Dendritic cell treated with granulocyte-macrophage colony-stimulating factor and Interleukin-4, amounts not matched to agents 40 ng/mL and 50 ng/mL, for 4 days (primary cell): ENCODE measurements at regions of chrX and their contacts with region 1.

Region 1: DNA sequence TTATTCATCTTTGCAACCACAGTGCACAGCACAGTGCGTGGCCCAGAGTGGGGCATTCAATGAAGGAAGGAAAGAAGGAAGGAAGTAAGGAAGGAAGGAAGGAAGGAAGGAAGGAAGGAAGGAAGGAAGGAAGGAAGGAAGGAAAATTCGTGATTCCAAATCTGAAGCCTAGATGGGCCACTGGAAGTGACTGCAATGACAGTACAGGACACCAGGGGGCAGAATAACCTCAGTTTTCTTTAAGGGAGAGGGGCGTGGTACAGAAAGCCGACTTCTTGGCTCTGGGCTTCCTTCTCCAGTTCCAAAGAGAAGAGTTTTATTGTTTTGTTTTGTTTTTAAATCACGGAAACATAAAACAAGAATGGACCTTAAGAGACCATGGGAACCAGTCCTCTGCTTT is 47.8 kb downstream of the APLN start:
- H3K4me3 Mint-ChIP-seq: no peak overlapping the region
- H3K27ac Mint-ChIP-seq: no peak overlapping the region
- H3K4me1 Mint-ChIP-seq: peaks cover 31% of the 10 kb centered on the region
- H3K27me3 Mint-ChIP-seq: no peaks in the 10 kb centered on the region

Region 2: DNA sequence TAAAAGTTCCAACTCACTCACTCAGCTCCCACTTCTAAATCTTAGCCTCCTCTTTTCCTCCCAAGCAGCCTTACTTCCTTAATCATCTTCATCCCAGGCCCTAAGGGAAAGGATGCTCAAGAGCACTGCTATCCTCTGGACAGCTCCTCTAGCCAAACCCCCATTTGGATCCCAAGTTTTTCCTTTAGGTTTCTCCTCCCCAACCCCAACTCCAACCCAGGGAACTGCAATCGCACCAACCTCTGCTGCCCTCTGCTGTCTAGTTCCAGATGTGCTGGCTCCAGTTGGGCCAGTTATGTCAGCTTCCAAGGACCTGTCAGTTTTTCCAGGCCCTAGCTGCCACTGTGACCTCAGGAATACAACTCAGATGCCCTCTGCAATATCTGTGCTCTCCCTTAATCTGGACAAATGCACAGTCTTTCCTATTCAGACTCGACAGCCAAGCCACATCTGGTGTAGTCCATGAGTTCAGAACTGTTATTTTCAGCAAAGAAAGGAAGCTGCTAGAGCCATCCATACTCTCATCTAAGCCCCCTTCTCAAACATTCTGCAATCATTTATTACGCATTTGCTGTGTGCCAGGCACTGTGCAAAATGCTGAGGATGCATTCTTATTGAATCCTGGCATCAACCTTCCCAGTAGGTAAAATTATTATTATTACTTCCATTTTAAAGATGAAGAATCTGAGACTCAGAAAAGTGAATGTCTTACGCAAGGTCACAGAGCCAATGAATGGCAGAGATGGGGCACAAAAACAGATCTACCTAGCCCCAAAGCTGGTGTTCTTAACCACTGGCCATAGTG is 119.6 kb after region 1 on chrX:
- intact Hi-C with region 1: loop called (anchors 1 kb)
- H3K4me3 Mint-ChIP-seq: no peak overlapping the region
- H3K27ac Mint-ChIP-seq: no peak overlapping the region
- H3K4me1 Mint-ChIP-seq: peaks cover 33% of the 10 kb centered on the region
- H3K27me3 Mint-ChIP-seq: peaks cover 7% of the 10 kb centered on the region

Region 3: DNA sequence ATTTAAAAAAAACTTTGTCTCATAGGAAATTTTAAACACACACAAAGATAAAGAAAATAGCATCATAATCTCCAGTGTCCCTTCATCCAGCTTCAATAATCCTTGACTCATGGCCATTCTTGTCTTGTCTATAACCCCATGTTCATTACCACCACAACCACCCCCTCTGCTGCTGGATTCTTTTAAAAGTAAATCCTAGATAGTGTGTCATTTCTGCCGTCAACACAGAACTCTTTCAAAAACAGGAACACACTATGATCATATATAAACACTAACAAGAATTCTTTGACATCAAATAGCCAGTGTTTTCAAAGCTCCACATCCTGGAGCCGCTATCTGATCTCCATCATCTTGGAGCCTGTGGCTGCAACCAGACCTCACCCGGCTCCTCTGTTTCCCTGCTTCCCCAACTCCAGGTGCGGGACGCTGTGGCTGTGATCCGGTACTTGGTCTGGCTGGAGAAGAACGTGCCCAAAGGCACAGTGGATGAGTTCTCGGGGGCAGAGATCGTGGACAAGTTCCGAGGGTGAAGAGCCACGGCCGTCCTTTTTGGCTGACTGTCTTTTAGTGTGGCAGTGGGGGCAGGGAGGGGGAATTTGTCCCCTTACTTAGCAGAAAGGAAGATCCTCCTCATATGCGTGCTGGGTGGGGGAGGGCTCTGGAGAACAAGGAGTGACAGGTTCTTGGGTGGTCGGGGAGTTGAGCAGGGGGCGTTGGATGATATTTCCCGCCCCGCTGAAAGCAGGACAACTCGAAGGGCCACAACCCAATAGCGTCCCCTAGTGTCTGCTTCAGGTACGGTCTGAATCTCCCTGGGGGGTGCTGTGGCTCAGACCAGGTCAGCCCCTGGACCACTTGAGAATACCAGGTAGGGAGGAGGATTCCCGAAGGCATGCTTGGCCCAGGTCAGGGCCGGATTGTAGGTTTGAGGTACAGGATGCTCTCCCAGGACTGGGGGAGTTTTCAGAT is 147.4 kb after region 1 on chrX:
- intact Hi-C with region 1: loop called (anchors 5 kb)
- H3K4me3 Mint-ChIP-seq: peak overlapping the region; percentile 67
- H3K27ac Mint-ChIP-seq: peak overlapping the region; percentile 88
- H3K4me1 Mint-ChIP-seq: peaks cover 82% of the 10 kb centered on the region
- H3K27me3 Mint-ChIP-seq: no peaks in the 10 kb centered on the region

Region 4: DNA sequence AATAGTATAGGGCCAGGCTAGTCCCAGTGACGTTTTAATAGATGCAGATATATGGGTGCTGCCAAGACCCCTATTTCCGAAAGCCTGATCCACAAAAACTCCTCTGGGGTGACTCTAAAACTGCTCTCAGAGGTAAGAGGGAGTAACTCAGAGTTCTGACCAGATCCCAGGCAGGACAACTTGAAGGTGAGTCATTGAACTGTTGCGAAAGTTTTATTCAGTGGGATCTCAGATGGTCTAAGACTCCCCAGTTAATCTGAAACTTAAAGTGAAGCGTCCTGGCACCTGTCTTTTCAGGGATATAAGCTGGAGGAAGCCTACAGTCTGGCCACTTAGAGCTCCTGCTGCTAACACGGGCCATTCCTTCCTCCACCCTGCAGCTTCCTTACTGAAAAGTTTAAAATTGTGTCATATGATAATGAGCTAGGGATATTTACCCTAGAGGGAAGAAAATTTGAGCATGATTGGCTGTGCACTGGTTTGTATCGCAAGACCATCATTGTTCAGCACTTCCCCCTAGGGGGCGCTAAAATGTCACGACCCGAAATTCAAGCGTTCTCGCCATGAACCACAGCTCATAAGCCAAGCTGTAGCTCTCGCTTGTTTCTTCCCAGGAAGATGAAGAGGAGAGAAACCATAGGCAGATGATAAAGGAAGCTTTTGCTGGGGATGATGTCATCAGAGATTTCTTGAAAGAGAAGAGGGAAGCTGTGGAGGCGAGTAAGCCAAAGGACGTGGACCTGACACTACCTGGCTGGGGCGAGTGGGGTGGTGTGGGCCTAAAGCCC is 318.6 kb after region 1 on chrX:
- intact Hi-C with region 1: loop called (anchors 10 kb)
- H3K4me3 Mint-ChIP-seq: no peak overlapping the region
- H3K27ac Mint-ChIP-seq: no peak overlapping the region
- H3K4me1 Mint-ChIP-seq: peaks cover 18% of the 10 kb centered on the region
- H3K27me3 Mint-ChIP-seq: no peaks in the 10 kb centered on the region

Region 5: GRCh38 chrX:130060122-130061069 is 453.5 kb after region 1 on chrX:
- intact Hi-C with region 1: loop called (anchors 2 kb)
- H3K4me3 Mint-ChIP-seq: peak overlapping the region; percentile 82
- H3K27ac Mint-ChIP-seq: peak overlapping the region; percentile 90
- H3K4me1 Mint-ChIP-seq: peaks cover 16% of the 10 kb centered on the region
- H3K27me3 Mint-ChIP-seq: no peaks in the 10 kb centered on the region

Region 6: DNA sequence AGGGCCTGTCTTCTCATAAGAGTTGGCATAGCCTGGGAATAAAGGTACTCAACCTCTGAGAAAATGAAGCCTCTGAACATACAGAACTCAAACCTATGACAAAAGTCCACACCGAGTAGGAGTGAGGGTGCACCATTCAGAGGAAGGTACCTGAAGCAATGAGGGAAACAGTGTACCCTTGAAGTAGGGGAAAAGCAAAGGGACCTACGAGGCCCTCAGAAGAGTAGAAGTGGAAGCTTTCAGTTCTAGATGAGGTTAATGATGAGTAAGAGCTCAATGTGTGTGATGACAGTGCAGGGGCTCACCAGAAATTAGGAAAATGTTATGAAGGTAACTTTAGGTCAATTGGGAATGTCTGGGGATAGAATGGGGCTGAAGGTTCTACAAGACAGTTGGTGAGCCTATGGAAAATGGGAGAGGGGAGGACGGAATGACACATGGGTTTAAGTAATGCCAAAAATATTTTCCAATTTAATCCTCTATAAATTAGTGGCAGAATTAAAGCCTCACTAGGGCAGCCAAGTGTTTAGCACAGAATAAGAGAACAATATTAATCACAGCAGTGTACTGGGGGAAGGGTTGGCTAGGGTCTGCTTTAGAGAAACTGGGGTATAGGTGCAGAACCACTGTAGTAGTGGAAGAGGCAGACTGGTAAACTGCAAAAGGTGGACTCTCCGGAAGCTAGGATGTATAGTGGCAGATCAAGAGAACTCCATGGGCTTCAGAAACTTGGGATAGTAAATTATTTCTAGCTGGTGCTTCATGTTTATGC is 604.7 kb after region 1 on chrX:
- intact Hi-C with region 1: no loop called
- H3K4me3 Mint-ChIP-seq: no peak overlapping the region
- H3K27ac Mint-ChIP-seq: no peak overlapping the region
- H3K4me1 Mint-ChIP-seq: no peaks in the 10 kb centered on the region
- H3K27me3 Mint-ChIP-seq: no peaks in the 10 kb centered on the region